GM10248 (cell line): ENCODE measurements at regions of chr9 and their contacts with region 1.

Region 1: GRCh38 chr9:125513668-125514413 is 193.2 kb downstream of the MAPKAP1 start:
- DNase-seq: peak; percentile 66
- CTCF ChIP-seq: no peak

Region 2: GRCh38 chr9:125293134-125293533 is 220.7 kb before region 1 on chr9:
- CTCF ChIA-PET with region 1: no interaction called
- POLR2A ChIA-PET with region 1: no interaction called
- DNase-seq: no peak
- CTCF ChIP-seq: no peak

Region 3: GRCh38 chr9:125486576-125486975 is 27.3 kb before region 1 on chr9:
- CTCF ChIA-PET with region 1: no interaction called
- POLR2A ChIA-PET with region 1: no interaction called
- DNase-seq: no peak
- CTCF ChIP-seq: no peak

Region 4: DNA sequence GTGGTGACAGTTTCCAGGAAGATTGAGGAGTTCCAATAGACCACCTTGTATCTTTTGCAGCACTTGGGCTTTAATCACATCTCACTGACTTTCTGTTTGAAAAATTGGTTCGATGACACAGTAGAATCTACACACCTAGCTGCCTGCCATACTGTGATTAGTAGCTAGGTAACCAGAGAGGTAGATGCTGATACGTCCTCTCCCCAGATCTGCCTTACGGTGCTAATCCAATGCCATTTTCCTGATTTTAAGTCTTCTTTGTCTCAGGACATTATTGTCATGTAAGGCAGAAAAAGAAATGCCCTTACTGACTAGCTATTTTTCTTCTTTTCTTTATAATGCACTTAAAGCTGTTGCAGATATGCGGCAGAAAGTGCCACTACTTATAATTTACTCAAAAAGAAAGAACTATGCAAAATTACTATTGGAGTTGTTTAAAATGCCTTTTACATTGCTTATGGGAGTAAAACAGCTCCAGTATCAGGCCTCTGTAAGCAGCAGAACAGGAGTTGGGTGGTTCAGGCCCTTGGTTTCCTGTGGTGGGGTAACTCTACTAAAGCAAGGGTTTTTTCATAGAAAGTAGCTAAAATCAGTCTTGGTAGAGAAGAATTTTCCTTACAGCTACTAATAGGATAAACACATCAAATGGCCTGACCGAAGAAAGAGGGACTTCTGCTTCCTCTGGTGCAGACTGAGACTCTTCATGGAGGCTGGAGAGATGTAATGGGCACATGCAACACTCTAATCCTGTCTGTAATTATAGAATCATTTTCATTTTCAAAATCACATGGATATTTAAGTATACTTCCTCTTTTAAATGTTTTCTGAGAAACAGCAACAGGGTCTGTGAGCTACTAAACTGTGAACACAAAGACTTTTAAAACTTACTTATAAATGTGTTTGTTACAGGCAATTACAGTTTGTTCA is 16.0 kb after region 1 on chr9:
- CTCF ChIA-PET with region 1: interaction called, 11 read pairs
- POLR2A ChIA-PET with region 1: no interaction called
- DNase-seq: peak; percentile 37
- CTCF ChIP-seq: no peak